ENCODE measurements at regions of chr14 and their contacts with region 1.

Region 1: GRCh38 chr14:84445486-84445885 is 1084.5 kb upstream of the FLRT2 start:
- DNase-seq: no peak
- H3K4me3 ChIP-seq: no peak overlapping the region
- H3K27ac ChIP-seq: no peak overlapping the region
- H3K4me1 ChIP-seq: no peaks in the 10 kb centered on the region
- H3K27me3 ChIP-seq: no peaks in the 10 kb centered on the region
- CTCF ChIP-seq: no peak

Region 2: DNA sequence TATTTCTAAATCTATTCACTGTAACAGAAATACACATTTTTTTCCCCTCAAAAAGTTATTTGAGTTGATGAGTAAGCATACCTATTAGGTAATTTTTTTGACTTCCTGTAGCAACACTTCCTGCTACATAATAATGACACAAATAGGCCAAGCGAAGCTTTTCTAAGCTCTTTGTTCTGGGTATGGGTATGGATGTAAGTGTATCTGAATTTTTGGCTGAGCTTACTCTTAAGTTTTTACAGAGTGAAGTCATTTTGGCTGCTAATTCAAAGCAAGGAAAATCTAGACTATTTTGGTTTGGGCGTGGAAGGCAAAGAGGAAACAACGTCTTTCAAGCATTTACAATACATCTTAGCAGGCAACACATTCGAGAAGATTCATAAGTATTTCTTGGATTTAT is 121.5 kb before region 1 on chr14:
- CTCF ChIA-PET with region 1: no interaction called
- POLR2A ChIA-PET with region 1: interaction called, 10 read pairs
- intact Hi-C with region 1: no loop called
- DNase-seq: peak; percentile 67
- H3K4me3 ChIP-seq: no peak overlapping the region
- H3K27ac ChIP-seq: peak overlapping the region; percentile 6
- H3K4me1 ChIP-seq: peaks cover 14% of the 10 kb centered on the region
- H3K27me3 ChIP-seq: no peaks in the 10 kb centered on the region
- CTCF ChIP-seq: no peak